ENCODE measurements at regions of chr1 and their contacts with region 1.

Region 1: GRCh38 chr1:16055613-16056520 is 12.3 kb downstream of the CLCNKB start:
- DNase-seq: peak; percentile 87 to 98
- H3K4me3 ChIP-seq: no peak overlapping the region
- H3K27ac ChIP-seq: no peak overlapping the region
- H3K4me1 ChIP-seq: peaks cover 0 to 6% (median 3%) of the 10 kb centered on the region in 4 experiments; a peak in 5 of 7 replicates
- H3K27me3 ChIP-seq: no peaks in the 10 kb centered on the region
- CTCF ChIP-seq: peak; percentile 87 to 97 (median 90)
- EP300 ChIP-seq: no peak
- POLR2A ChIP-seq: no peak
- RAD21 ChIP-seq: peak; percentile 91 to 92

Region 2: GRCh38 chr1:16032388-16033103 is 23.3 kb before region 1 on chr1:
- CTCF ChIA-PET with region 1: interaction called, 28 read pairs
- POLR2A ChIA-PET with region 1: interaction called, 3 read pairs
- DNase-seq: peak; percentile 85 to 95
- H3K4me3 ChIP-seq: no peak overlapping the region
- H3K27ac ChIP-seq: no peak overlapping the region
- H3K4me1 ChIP-seq: peaks cover 0 to 14% (median 4%) of the 10 kb centered on the region in 4 experiments; a peak in 6 of 7 replicates
- H3K27me3 ChIP-seq: no peaks in the 10 kb centered on the region; a peak in 2 of 7 replicates
- CTCF ChIP-seq: peak; percentile 86 to 97 (median 90)
- EP300 ChIP-seq: no peak
- POLR2A ChIP-seq: no peak
- RAD21 ChIP-seq: peak; percentile 90 to 91

Region 3: DNA sequence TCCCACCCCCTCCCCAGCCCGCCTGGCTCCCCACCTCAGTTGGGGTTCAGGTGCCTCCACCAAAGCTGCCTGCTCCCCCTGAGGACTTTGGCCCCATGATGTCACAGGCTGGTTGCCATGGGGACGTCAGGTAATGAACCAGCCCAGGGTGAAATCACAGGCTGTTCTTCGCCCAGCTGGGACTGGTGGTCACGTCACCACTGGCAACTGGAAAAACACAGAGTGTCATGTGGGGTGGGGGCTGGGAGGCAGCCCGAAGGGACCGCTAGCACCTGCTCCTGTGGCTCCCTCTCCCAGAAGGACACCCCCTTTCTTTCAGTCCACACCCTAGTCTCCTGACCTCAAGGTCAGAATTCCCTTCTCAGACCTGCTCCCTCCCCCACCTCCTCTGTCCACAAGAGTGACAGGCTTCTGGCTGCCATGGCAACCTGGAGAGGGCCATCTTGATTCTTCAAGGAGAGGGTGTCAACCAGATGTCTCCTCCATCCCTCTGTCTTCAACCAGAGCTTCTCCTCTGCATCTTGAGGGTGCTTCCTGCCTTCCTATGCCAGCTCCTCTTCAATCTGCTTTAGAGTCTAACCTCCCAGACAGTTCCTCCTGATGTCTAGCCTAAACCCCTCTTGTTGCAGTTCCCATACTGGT is 11.4 kb after region 1 on chr1:
- CTCF ChIA-PET with region 1: interaction called, 10 read pairs
- POLR2A ChIA-PET with region 1: interaction called, 3 read pairs
- DNase-seq: no peak
- H3K4me3 ChIP-seq: no peak overlapping the region
- H3K27ac ChIP-seq: no peak overlapping the region
- H3K4me1 ChIP-seq: peaks cover 0 to 21% (median 13%) of the 10 kb centered on the region in 4 experiments; a peak in 6 of 7 replicates
- H3K27me3 ChIP-seq: peaks cover 0 to 8% (median 4%) of the 10 kb centered on the region in 4 experiments; a peak in 5 of 7 replicates
- CTCF ChIP-seq: no peak
- EP300 ChIP-seq: no peak
- POLR2A ChIP-seq: no peak
- RAD21 ChIP-seq: no peak

Region 4: GRCh38 chr1:16073490-16074119 is 17.7 kb after region 1 on chr1 and contains the start of gene FAM131C:
- CTCF ChIA-PET with region 1: interaction called, 10 read pairs
- POLR2A ChIA-PET with region 1: interaction called, 3 read pairs
- DNase-seq: peak in 1 of 2 experiments; percentile 75
- H3K4me3 ChIP-seq: peak within 1 kb of the TSS; percentile 40 to 69 (median 42)
- H3K27ac ChIP-seq: no peak within 1 kb of the TSS
- H3K4me1 ChIP-seq: peaks cover 2 to 19% (median 9%) of the 10 kb centered on the region in 4 experiments
- H3K27me3 ChIP-seq: peaks cover 4 to 38% (median 30%) of the 10 kb centered on the region in 4 experiments
- CTCF ChIP-seq: peak; percentile 42 to 74 (median 56)
- EP300 ChIP-seq: no peak
- POLR2A ChIP-seq: no peak
- RAD21 ChIP-seq: peak in 1 of 2 experiments; percentile 34; a peak in 2 of 4 replicates
- total RNA-seq, gene FAM131C: 0.25 and 0.78 TPM in 2 replicates

Region 5: DNA sequence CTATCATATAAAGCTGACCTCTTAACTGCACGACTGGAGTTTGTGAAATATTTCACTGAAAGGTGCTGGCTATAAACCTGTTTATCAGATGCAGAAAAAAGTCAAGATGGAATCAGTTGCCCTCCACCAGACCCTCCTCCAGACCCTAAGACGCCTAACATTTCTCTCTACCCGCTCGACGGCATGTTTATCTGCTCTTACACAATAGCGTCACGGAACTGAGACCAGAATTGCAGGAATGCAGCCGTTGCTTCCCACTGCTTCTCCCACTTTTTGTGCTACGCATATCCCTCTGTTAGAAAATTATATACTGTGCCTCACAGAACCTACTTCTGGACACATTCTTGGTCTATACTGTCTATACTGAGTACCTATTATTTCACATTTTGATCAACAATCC is 45.8 kb after region 1 on chr1:
- CTCF ChIA-PET with region 1: no interaction called
- POLR2A ChIA-PET with region 1: no interaction called
- DNase-seq: no peak
- H3K4me3 ChIP-seq: no peak overlapping the region
- H3K27ac ChIP-seq: no peak overlapping the region
- H3K4me1 ChIP-seq: no peaks in the 10 kb centered on the region; a peak in 1 of 7 replicates
- H3K27me3 ChIP-seq: no peaks in the 10 kb centered on the region; a peak in 1 of 7 replicates
- CTCF ChIP-seq: no peak
- EP300 ChIP-seq: no peak
- POLR2A ChIP-seq: no peak
- RAD21 ChIP-seq: no peak

Region 6: DNA sequence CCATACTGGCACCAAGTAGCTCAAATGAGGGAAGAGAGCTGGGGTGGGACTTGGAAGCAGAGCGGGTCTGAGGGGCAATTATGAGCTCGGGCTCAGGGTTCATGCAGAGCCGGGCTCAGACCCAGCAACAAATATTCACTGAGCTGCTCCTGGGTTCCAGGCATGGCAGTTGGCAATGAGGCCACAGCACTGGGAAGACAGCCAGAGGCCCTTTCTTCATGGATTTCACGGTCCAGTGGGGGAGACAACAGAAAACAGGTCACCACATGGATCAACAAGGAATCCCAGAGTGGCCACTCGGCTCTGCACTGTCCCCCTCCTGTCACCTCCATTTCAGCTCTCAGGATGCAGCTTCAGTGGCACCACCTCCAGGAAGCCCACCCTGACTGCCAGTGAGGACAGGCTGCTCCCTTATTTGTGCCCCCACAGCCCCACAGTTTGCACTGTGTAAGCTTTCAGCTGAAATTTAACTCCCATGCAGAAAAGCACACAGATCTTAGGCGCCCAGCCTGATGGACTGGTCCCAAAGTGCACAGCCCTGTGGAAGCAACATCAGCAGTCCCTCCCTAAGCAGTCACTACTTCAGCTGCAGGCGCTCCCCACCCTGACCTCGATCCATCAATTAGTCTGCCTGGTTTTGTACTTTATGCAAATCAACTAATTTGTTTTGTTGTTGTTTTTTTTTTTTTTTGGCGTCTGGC is 134.2 kb after region 1 on chr1:
- CTCF ChIA-PET with region 1: no interaction called
- POLR2A ChIA-PET with region 1: no interaction called
- DNase-seq: no peak
- H3K4me3 ChIP-seq: no peak overlapping the region
- H3K27ac ChIP-seq: no peak overlapping the region
- H3K4me1 ChIP-seq: no peaks in the 10 kb centered on the region
- H3K27me3 ChIP-seq: no peaks in the 10 kb centered on the region
- CTCF ChIP-seq: no peak
- EP300 ChIP-seq: no peak
- POLR2A ChIP-seq: no peak
- RAD21 ChIP-seq: no peak